ENCODE measurements at regions of chr4 and their contacts with region 1.

Region 1: DNA sequence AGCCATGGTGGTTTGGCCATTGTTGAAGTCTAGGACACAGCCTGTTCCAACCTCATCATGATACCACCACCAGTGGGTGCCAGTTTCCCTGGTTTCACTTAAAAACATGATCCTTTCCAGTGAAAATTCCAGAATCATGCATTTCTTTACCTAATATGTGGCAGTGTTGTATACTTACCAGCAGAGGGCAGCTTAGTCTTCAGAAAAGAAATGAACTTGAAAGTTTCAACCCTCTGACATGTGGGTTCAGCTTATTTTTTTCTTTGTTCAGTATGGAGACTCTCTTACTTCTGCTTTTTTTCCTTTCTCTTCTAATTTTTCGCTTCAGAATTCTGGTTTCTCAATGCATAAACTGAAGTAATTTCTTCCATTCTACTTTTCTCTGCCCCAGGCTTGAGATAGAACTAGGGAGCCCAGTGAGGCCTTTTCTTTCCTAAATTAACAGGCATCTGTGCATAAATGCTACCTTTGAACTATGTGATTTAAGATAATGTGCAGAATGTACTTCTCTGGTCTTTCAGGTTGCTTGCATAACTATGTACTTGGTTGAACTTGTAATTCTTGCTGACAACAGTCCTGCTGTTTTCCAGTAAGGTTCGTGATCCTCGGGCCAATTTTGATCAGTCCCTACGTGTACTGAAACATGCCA is 10.7 kb downstream of the LIAS start:
- DNase-seq: peak in 4 of 35 experiments; percentile 9 to 64 (median 16)
- ATAC-seq: peak; percentile 71 to 84 (median 74)
- H3K4me3 ChIP-seq: no peak overlapping the region
- H3K4me3 Mint-ChIP-seq: no peak overlapping the region
- H3K27ac ChIP-seq: no peak overlapping the region
- H3K27ac Mint-ChIP-seq: peak overlapping the region in 1 of 2 donors; percentile 55
- H3K4me1 ChIP-seq: no peaks in the 10 kb centered on the region
- H3K4me1 Mint-ChIP-seq: peaks cover 2 to 6% (median 4%) of the 10 kb centered on the region in 3 donors
- H3K27me3 ChIP-seq: no peaks in the 10 kb centered on the region
- H3K27me3 Mint-ChIP-seq: no peaks in the 10 kb centered on the region

Region 2: GRCh38 chr4:38980903-38981676 is 488.5 kb before region 1 on chr4:
- CTCF ChIA-PET with region 1: no interaction called
- POLR2A ChIA-PET with region 1: no interaction called
- DNase-seq: no peak
- ATAC-seq: no peak
- H3K4me3 ChIP-seq: no peak overlapping the region
- H3K4me3 Mint-ChIP-seq: no peak overlapping the region
- H3K27ac ChIP-seq: no peak overlapping the region
- H3K27ac Mint-ChIP-seq: no peak overlapping the region
- H3K4me1 ChIP-seq: peaks cover 0 to 4% of the 10 kb centered on the region in 2 experiments
- H3K4me1 Mint-ChIP-seq: peaks cover 15 to 23% (median 23%) of the 10 kb centered on the region in 3 donors
- H3K27me3 ChIP-seq: no peaks in the 10 kb centered on the region
- H3K27me3 Mint-ChIP-seq: no peaks in the 10 kb centered on the region

Region 3: GRCh38 chr4:39422247-39422646 is 47.3 kb before region 1 on chr4:
- CTCF ChIA-PET with region 1: no interaction called
- POLR2A ChIA-PET with region 1: no interaction called
- DNase-seq: no peak
- ATAC-seq: no peak
- H3K4me3 ChIP-seq: no peak overlapping the region
- H3K4me3 Mint-ChIP-seq: no peak overlapping the region
- H3K27ac ChIP-seq: no peak overlapping the region
- H3K27ac Mint-ChIP-seq: no peak overlapping the region
- H3K4me1 ChIP-seq: no peaks in the 10 kb centered on the region
- H3K4me1 Mint-ChIP-seq: no peaks in the 10 kb centered on the region
- H3K27me3 ChIP-seq: no peaks in the 10 kb centered on the region
- H3K27me3 Mint-ChIP-seq: no peaks in the 10 kb centered on the region

Region 4: DNA sequence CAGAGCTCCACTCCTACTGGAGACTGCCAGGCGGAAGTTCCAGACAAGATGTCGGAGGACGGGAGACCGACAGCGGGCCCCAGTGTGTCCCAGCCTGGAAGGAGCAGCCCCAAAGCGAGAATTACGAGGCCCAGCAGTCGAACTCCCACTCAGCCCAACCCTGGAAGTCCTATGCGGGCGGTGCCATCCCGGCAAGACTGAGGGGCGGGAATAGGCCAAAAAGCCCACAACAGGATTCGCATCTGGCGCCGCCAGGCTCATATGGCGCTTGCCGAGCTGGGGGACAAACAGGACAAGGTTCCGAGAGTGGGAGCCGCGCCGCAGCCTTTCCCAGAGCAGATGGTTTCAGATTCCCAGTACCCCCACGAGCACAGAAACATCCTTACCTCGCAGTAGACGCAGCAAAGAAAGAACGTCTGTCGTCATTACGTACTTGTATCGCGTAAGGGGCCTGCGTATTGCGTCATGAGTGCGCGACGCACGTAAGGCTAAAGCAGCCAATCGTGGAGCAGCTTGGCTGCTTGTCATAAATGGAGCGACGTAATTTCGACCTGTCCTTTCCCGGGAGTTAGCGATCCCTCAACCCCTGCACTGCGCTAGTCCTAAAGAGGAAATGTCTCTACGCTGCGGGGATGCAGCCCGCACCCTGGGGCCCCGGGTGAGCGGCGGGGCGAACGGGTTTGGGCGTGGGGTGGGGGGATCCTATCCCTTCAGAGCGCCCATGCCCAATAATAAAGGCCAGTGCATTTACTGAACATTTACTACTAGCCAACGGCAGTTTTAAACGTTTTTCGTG is 10.8 kb before region 1 on chr4 and contains the starts of genes LIAS and RPL9:
- CTCF ChIA-PET with region 1: interaction called, 8 to 13 read pairs
- POLR2A ChIA-PET with region 1: interaction called, 3 to 7 read pairs
- DNase-seq: peak; percentile 80 to 99 (median 91)
- ATAC-seq: peak; percentile 85 to 86 (median 86)
- H3K4me3 ChIP-seq: peak within 1 kb of the TSS; percentile 77 to 98
- H3K4me3 Mint-ChIP-seq: peak within 1 kb of the TSS; percentile 92 to 96 (median 95)
- H3K27ac ChIP-seq: peak within 1 kb of the TSS; percentile 97
- H3K27ac Mint-ChIP-seq: peak within 1 kb of the TSS; percentile 98 to 99
- H3K4me1 ChIP-seq: peaks cover 15 to 20% of the 10 kb centered on the region in 2 experiments
- H3K4me1 Mint-ChIP-seq: peaks cover 49 to 57% (median 51%) of the 10 kb centered on the region in 3 donors
- H3K27me3 ChIP-seq: no peaks in the 10 kb centered on the region
- H3K27me3 Mint-ChIP-seq: no peaks in the 10 kb centered on the region
- total RNA-seq, gene LIAS: 11.3 to 22.8 (median 19.5) TPM
- total RNA-seq, gene RPL9: 2,481 to 3,129 (median 2,646) TPM

Region 5: GRCh38 chr4:39565878-39566600 is 96.5 kb after region 1 on chr4:
- CTCF ChIA-PET with region 1: no interaction called
- POLR2A ChIA-PET with region 1: interaction called in 1 of 2 experiments, 10 read pairs
- DNase-seq: no peak
- ATAC-seq: no peak
- H3K4me3 ChIP-seq: no peak overlapping the region
- H3K4me3 Mint-ChIP-seq: no peak overlapping the region
- H3K27ac ChIP-seq: no peak overlapping the region
- H3K27ac Mint-ChIP-seq: no peak overlapping the region
- H3K4me1 ChIP-seq: peaks cover 0 to 2% of the 10 kb centered on the region in 2 experiments
- H3K4me1 Mint-ChIP-seq: peaks cover 0 to 7% (median 0%) of the 10 kb centered on the region in 3 donors
- H3K27me3 ChIP-seq: no peaks in the 10 kb centered on the region
- H3K27me3 Mint-ChIP-seq: no peaks in the 10 kb centered on the region

Region 6: GRCh38 chr4:39591290-39591689 is 121.7 kb after region 1 on chr4:
- CTCF ChIA-PET with region 1: no interaction called
- POLR2A ChIA-PET with region 1: no interaction called
- DNase-seq: no peak
- ATAC-seq: no peak
- H3K4me3 ChIP-seq: no peak overlapping the region
- H3K4me3 Mint-ChIP-seq: no peak overlapping the region
- H3K27ac ChIP-seq: no peak overlapping the region
- H3K27ac Mint-ChIP-seq: no peak overlapping the region
- H3K4me1 ChIP-seq: no peaks in the 10 kb centered on the region
- H3K4me1 Mint-ChIP-seq: no peaks in the 10 kb centered on the region
- H3K27me3 ChIP-seq: no peaks in the 10 kb centered on the region
- H3K27me3 Mint-ChIP-seq: no peaks in the 10 kb centered on the region

Region 7: DNA sequence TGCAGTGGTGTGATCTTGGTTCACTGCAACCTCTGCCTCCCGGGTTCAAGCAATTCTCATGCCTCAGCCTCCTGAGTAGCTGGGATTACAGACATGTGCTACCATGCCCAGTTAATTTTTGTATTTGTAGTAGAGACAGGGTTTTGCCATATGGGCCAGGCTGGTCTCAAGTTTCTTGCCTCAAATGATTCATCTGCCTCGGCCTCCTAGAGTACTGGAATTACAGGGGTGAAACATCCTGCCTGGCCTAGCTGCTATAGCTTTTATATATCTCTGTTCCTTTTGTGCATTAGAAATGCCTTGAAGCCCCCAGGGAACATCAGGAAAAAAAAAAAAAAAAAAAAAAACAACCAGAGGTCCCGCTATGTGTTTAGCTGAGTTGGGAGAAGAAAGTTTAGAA is 263.2 kb after region 1 on chr4:
- CTCF ChIA-PET with region 1: interaction called in 1 of 2 experiments, 4 read pairs
- POLR2A ChIA-PET with region 1: interaction called, 3 to 13 read pairs
- DNase-seq: no peak
- ATAC-seq: no peak
- H3K4me3 ChIP-seq: no peak overlapping the region
- H3K4me3 Mint-ChIP-seq: no peak overlapping the region
- H3K27ac ChIP-seq: no peak overlapping the region
- H3K27ac Mint-ChIP-seq: no peak overlapping the region
- H3K4me1 ChIP-seq: no peaks in the 10 kb centered on the region
- H3K4me1 Mint-ChIP-seq: peaks cover 26 to 33% (median 26%) of the 10 kb centered on the region in 3 donors
- H3K27me3 ChIP-seq: no peaks in the 10 kb centered on the region
- H3K27me3 Mint-ChIP-seq: no peaks in the 10 kb centered on the region

Region 8: GRCh38 chr4:39977489-39978377 is 508.2 kb after region 1 on chr4 and contains the start of gene PDS5A:
- CTCF ChIA-PET with region 1: interaction called in 1 of 2 experiments, 20 read pairs
- POLR2A ChIA-PET with region 1: no interaction called
- DNase-seq: peak; percentile 77 to 95 (median 85)
- ATAC-seq: peak; percentile 85 to 89 (median 87)
- H3K4me3 ChIP-seq: peak within 1 kb of the TSS; percentile 82 to 84
- H3K4me3 Mint-ChIP-seq: peak within 1 kb of the TSS; percentile 82 to 87 (median 86)
- H3K27ac ChIP-seq: peak within 1 kb of the TSS; percentile 79
- H3K27ac Mint-ChIP-seq: peak within 1 kb of the TSS; percentile 95 to 97
- H3K4me1 ChIP-seq: peaks cover 19 to 31% of the 10 kb centered on the region in 2 experiments
- H3K4me1 Mint-ChIP-seq: peaks cover 37 to 39% (median 37%) of the 10 kb centered on the region in 3 donors
- H3K27me3 ChIP-seq: no peaks in the 10 kb centered on the region
- H3K27me3 Mint-ChIP-seq: no peaks in the 10 kb centered on the region
- total RNA-seq, gene PDS5A: 73.5 to 113 (median 88.5) TPM

Region 9: DNA sequence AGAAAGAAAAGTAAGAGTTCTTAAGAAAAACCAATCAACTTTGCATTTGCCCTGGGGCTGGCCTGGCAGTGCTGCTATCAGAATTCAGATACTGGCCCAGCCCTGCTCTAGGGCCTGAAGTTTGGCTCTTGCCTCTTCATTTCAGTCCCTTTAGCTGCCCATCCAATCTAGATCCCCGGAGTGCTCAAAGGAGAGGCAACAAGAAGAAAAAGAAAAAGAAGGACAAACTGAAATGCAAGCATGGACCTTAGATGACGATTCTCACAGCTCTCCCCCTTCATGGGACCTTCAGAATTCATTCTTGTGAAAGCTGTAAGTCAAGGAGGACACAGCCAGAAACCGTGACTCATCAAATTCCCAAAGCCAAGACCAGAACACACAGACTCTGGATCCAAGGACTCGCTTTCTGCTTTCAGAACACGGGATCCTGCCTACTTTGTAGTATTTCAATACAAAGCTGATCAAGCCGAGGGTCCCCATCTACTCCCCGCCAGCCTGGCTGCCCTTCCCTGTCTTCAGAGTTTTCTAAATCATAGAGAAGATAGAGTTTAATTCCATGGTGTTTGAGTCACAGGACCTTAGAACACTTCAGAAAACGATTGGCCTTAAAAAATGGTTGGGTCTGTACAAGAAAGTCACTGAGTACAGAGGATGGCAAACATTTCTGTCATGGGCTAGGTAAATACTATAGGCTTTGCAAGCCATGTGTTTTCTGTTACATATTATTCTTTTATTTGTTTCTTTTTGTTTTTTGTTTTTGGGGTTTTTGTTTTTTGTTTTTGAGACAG is 1056.5 kb after region 1 on chr4:
- CTCF ChIA-PET with region 1: no interaction called
- POLR2A ChIA-PET with region 1: interaction called in 1 of 2 experiments, 13 read pairs
- DNase-seq: no peak
- ATAC-seq: no peak
- H3K4me3 ChIP-seq: no peak overlapping the region
- H3K4me3 Mint-ChIP-seq: no peak overlapping the region
- H3K27ac ChIP-seq: no peak overlapping the region
- H3K27ac Mint-ChIP-seq: no peak overlapping the region
- H3K4me1 ChIP-seq: no peaks in the 10 kb centered on the region
- H3K4me1 Mint-ChIP-seq: peaks cover 0 to under 1% (median 0%) of the 10 kb centered on the region in 3 donors
- H3K27me3 ChIP-seq: peaks cover 0 to 3% of the 10 kb centered on the region in 2 experiments
- H3K27me3 Mint-ChIP-seq: no peaks in the 10 kb centered on the region

Region 10: DNA sequence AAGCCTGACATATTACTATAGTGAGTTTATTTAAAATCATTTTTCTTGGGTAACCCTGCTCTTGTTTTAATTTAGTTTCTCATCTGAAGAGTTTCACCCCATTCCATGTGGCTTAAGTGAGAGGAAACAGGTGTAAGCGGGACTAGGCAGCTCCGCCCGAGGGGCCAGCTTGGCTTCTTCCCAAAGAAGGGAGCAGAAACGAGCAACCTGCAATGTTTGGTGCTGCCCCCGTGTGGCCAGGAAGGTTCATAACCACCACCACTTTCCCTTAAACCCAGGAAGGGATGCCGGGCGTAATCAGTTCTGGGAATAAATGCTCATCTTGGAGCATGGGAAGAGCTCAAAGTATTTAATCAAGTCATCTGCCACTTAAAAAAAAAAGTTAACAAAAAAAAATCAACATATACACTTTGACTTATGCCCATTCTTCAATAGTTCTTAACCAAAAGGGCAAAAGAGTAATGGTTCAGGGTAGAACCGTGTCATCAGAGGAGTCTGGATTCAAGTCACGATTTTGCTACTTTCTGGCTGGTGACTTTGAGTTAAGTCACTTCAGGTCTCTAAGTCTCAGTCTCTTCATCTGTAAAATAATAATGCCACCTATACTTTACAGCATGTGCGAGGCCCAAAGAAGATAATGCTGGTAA is 1428.1 kb after region 1 on chr4:
- CTCF ChIA-PET with region 1: interaction called in 1 of 2 experiments, 10 read pairs
- POLR2A ChIA-PET with region 1: no interaction called
- DNase-seq: peak in 33 of 35 experiments; percentile 11 to 73 (median 39)
- ATAC-seq: peak; percentile 62 to 72 (median 66)
- H3K4me3 ChIP-seq: peak overlapping the region in 1 of 2 donors; percentile 10
- H3K4me3 Mint-ChIP-seq: peak overlapping the region; percentile 43 to 69 (median 62)
- H3K27ac ChIP-seq: no peak overlapping the region
- H3K27ac Mint-ChIP-seq: no peak overlapping the region
- H3K4me1 ChIP-seq: peaks cover 0 to 5% of the 10 kb centered on the region in 2 experiments
- H3K4me1 Mint-ChIP-seq: peaks cover 4 to 8% (median 5%) of the 10 kb centered on the region in 3 donors
- H3K27me3 ChIP-seq: no peaks in the 10 kb centered on the region
- H3K27me3 Mint-ChIP-seq: no peaks in the 10 kb centered on the region

Measured in T-cell (primary cell).